ENCODE measurements at regions of chr2 and their contacts with region 1.

Region 1: DNA sequence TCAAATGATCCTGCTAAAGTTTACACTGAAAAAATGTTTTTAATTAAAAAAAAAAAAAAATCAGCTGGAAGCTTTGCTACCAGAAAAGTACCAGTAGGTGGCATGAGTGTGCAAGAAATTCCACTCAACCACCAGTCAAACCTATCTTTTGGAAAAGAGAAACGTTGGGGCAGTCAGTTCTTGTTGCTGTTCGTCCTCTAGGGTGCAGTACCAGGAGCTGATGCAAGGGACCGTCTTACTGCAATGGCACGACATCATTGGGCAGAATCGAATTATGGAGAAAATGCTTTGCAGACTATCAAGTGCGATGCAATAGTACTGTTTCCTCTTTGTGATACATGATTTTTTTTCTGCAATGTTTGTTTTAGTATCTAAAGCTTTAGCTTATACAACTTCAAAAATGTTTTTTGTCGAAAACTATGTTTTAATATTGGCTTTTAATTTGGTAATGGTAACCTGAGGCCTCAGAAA is 18.3 kb downstream of the YPEL5 start:
- DNase-seq: peak; percentile 77 to 85 (median 83)
- H3K4me3 ChIP-seq: no peak overlapping the region
- H3K4me3 Mint-ChIP-seq: peak overlapping the region in 1 of 8 donors; percentile 17
- H3K27ac ChIP-seq: no peak overlapping the region
- H3K27ac Mint-ChIP-seq: peak overlapping the region in 2 of 7 donors; percentile 47 to 88
- H3K4me1 ChIP-seq: peaks cover 4% of the 10 kb centered on the region
- H3K4me1 Mint-ChIP-seq: peaks cover 0 to 10% (median 3%) of the 10 kb centered on the region in 4 donors
- H3K27me3 ChIP-seq: no peaks in the 10 kb centered on the region
- H3K27me3 Mint-ChIP-seq: no peaks in the 10 kb centered on the region

Region 2: GRCh38 chr2:29744976-29745375 is 420.1 kb before region 1 on chr2:
- CTCF ChIA-PET with region 1: no interaction called
- POLR2A ChIA-PET with region 1: no interaction called
- intact Hi-C with region 1: no loop called
- DNase-seq: no peak
- H3K4me3 ChIP-seq: no peak overlapping the region
- H3K4me3 Mint-ChIP-seq: no peak overlapping the region
- H3K27ac ChIP-seq: no peak overlapping the region
- H3K27ac Mint-ChIP-seq: no peak overlapping the region
- H3K4me1 ChIP-seq: no peaks in the 10 kb centered on the region
- H3K4me1 Mint-ChIP-seq: no peaks in the 10 kb centered on the region
- H3K27me3 ChIP-seq: no peaks in the 10 kb centered on the region
- H3K27me3 Mint-ChIP-seq: peaks cover 0 to 3% of the 10 kb centered on the region in 2 donors

Region 3: DNA sequence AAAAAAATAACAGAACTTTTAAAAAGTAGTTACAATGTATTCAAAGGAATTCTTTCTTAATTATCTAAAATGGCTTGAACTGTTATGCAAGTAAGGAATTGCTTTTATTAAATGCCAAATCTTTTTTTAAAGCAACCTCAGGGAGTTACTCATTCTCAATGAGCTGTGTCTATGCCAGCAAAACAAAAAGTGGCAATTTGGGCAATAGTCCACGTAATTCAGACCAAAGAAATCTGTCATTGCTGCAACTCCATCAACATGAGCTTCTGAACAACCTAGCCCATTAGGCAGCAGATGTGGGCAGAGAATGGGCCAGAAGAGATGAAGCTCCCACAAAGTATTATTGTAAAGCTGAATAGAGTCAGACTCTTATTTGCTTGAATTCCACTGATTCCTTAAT is 362.1 kb before region 1 on chr2:
- CTCF ChIA-PET with region 1: no interaction called
- POLR2A ChIA-PET with region 1: no interaction called
- intact Hi-C with region 1: no loop called
- DNase-seq: no peak
- H3K4me3 ChIP-seq: no peak overlapping the region
- H3K4me3 Mint-ChIP-seq: no peak overlapping the region
- H3K27ac ChIP-seq: no peak overlapping the region
- H3K27ac Mint-ChIP-seq: no peak overlapping the region
- H3K4me1 ChIP-seq: no peaks in the 10 kb centered on the region
- H3K4me1 Mint-ChIP-seq: no peaks in the 10 kb centered on the region
- H3K27me3 ChIP-seq: no peaks in the 10 kb centered on the region
- H3K27me3 Mint-ChIP-seq: peaks cover 11 to 22% of the 10 kb centered on the region in 2 donors

Region 4: GRCh38 chr2:30139131-30139870 is 25.8 kb before region 1 on chr2:
- CTCF ChIA-PET with region 1: interaction called, 14 read pairs
- POLR2A ChIA-PET with region 1: no interaction called
- intact Hi-C with region 1: no loop called
- DNase-seq: peak; percentile 32 to 51 (median 47)
- H3K4me3 ChIP-seq: no peak overlapping the region
- H3K4me3 Mint-ChIP-seq: peak overlapping the region in 5 of 8 donors; percentile 6 to 55 (median 37)
- H3K27ac ChIP-seq: no peak overlapping the region
- H3K27ac Mint-ChIP-seq: peak overlapping the region; percentile 25 to 86 (median 57)
- H3K4me1 ChIP-seq: peaks cover 8% of the 10 kb centered on the region
- H3K4me1 Mint-ChIP-seq: peaks cover 0 to 27% (median 11%) of the 10 kb centered on the region in 4 donors
- H3K27me3 ChIP-seq: no peaks in the 10 kb centered on the region
- H3K27me3 Mint-ChIP-seq: peaks cover 4 to 5% of the 10 kb centered on the region in 2 donors

Region 5: DNA sequence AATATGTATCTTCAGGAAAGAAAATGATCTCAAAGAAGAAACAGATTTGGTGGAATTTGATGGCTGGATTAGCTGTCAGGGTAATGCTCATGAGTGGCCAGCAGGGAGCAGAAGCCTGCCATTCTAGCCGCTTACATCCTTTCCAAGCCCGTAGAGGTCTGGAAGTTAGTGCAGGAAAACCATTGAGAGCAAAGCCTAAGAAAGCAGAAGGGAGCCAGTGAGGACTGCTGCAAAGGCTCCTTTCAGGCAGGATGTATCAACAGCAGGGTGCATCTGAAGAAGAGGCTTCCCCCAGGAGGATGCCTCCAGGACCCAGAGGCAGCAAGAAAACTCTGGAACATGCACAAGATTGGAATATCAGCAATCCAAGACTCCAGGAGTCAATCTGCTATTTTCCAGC is 43.4 kb after region 1 on chr2:
- CTCF ChIA-PET with region 1: interaction called, 94 read pairs
- POLR2A ChIA-PET with region 1: interaction called, 16 read pairs
- intact Hi-C with region 1: loop called (anchors 1 kb)
- DNase-seq: peak in 3 of 5 donors; percentile 35 to 48 (median 43)
- H3K4me3 ChIP-seq: no peak overlapping the region
- H3K4me3 Mint-ChIP-seq: peak overlapping the region in 6 of 8 donors; percentile 8 to 77 (median 54)
- H3K27ac ChIP-seq: no peak overlapping the region
- H3K27ac Mint-ChIP-seq: peak overlapping the region in 6 of 7 donors; percentile 20 to 88 (median 58)
- H3K4me1 ChIP-seq: peaks cover 23% of the 10 kb centered on the region
- H3K4me1 Mint-ChIP-seq: peaks cover 13 to 20% (median 16%) of the 10 kb centered on the region in 4 donors
- H3K27me3 ChIP-seq: no peaks in the 10 kb centered on the region
- H3K27me3 Mint-ChIP-seq: no peaks in the 10 kb centered on the region

Region 6: GRCh38 chr2:30239308-30239985 is 74.4 kb after region 1 on chr2:
- CTCF ChIA-PET with region 1: interaction called, 18 read pairs
- POLR2A ChIA-PET with region 1: interaction called, 9 read pairs
- intact Hi-C with region 1: no loop called
- DNase-seq: peak; percentile 76 to 80 (median 77)
- H3K4me3 ChIP-seq: peak overlapping the region in 1 of 2 donors; percentile 22
- H3K4me3 Mint-ChIP-seq: peak overlapping the region; percentile 76 to 99 (median 87)
- H3K27ac ChIP-seq: peak overlapping the region; percentile 6
- H3K27ac Mint-ChIP-seq: peak overlapping the region; percentile 71 to 90 (median 83)
- H3K4me1 ChIP-seq: peaks cover 90% of the 10 kb centered on the region
- H3K4me1 Mint-ChIP-seq: peaks cover 72 to 94% (median 82%) of the 10 kb centered on the region in 4 donors
- H3K27me3 ChIP-seq: no peaks in the 10 kb centered on the region
- H3K27me3 Mint-ChIP-seq: no peaks in the 10 kb centered on the region

Region 7: DNA sequence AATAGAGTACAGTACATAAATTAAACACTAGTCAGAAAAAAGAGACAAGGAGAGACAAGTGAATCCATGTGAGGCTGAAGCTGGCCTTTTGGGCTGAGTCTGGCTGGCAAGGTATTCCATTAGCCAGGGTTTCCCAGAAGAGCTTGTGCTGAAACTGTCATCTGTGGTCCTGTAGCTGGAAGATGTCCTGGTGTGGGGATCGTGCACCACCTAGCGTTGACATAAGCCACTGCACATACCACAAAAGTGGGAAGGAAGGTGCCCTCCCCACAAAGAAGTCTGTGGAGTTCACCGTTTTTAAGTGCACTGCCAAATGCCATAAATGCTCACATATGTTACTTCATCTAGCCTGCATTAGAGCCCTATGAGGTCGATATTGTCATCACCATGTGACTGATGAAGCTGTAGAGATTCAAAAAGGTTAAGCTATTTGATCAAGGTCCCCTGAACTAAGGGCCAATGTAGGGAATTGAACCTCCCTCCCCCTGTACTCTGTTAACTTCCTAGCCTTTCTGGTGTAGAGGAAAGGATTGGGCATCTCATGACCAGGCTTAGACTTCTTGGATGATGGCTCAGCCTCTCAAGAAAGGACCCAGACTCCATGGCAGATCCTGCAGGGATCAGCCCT is 1005.1 kb after region 1 on chr2:
- CTCF ChIA-PET with region 1: interaction called, 6 read pairs
- POLR2A ChIA-PET with region 1: no interaction called
- intact Hi-C with region 1: loop called (anchors 10 kb)
- DNase-seq: peak in 4 of 5 donors; percentile 27 to 37 (median 30)
- H3K4me3 ChIP-seq: no peak overlapping the region
- H3K4me3 Mint-ChIP-seq: no peak overlapping the region
- H3K27ac ChIP-seq: no peak overlapping the region
- H3K27ac Mint-ChIP-seq: no peak overlapping the region
- H3K4me1 ChIP-seq: no peaks in the 10 kb centered on the region
- H3K4me1 Mint-ChIP-seq: peaks cover 0 to under 1% (median 0%) of the 10 kb centered on the region in 4 donors
- H3K27me3 ChIP-seq: no peaks in the 10 kb centered on the region
- H3K27me3 Mint-ChIP-seq: no peaks in the 10 kb centered on the region

Region 8: GRCh38 chr2:31945572-31945935 is 1780.5 kb after region 1 on chr2:
- CTCF ChIA-PET with region 1: no interaction called
- POLR2A ChIA-PET with region 1: no interaction called
- intact Hi-C with region 1: loop called (anchors 10 kb)
- DNase-seq: no peak
- H3K4me3 ChIP-seq: no peak overlapping the region
- H3K4me3 Mint-ChIP-seq: peak overlapping the region in 1 of 8 donors; percentile 16
- H3K27ac ChIP-seq: no peak overlapping the region
- H3K27ac Mint-ChIP-seq: peak overlapping the region in 2 of 7 donors; percentile 23 to 49
- H3K4me1 ChIP-seq: peaks cover 24% of the 10 kb centered on the region
- H3K4me1 Mint-ChIP-seq: peaks cover 37 to 53% (median 44%) of the 10 kb centered on the region in 4 donors
- H3K27me3 ChIP-seq: no peaks in the 10 kb centered on the region
- H3K27me3 Mint-ChIP-seq: no peaks in the 10 kb centered on the region

Measured in CD4-positive, alpha-beta memory T cell (primary cell).